Mammary epithelial cell (primary cell): ENCODE measurements at regions of chr10 and their contacts with region 1.

Region 1: DNA sequence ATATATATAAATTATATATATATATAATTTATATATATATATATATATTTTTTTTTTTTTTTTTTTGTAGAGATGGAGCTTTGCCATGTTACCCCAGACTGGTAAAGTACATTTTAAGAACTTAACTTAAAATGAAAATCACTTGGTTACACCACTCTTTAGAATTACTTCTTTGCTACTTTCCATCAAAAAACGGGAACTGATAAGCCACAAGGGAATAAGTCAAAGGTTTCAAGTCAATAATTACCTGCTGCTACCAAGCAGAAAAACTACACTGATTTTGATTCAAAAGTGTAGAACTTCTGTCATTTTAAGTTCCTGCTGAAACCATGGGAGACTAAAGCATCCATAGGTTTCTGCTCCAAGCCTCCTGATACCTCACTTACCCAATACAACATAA is 12.2 kb downstream of the PPA1 start:
- DNase-seq: no peak
- H3K4me3 ChIP-seq: no peak overlapping the region
- H3K27ac ChIP-seq: peak overlapping the region; percentile 42
- H3K4me1 ChIP-seq: peaks cover 22% of the 10 kb centered on the region
- H3K27me3 ChIP-seq: no peaks in the 10 kb centered on the region
- CTCF ChIP-seq: no peak

Region 2: GRCh38 chr10:69968830-69969229 is 252.2 kb before region 1 on chr10:
- CTCF ChIA-PET with region 1: no interaction called
- dilution Hi-C with region 1: no loop called
- in situ Hi-C with region 1: no loop called
- intact Hi-C with region 1: loop called (anchors 1 kb)
- DNase-seq: peak; percentile 32
- H3K4me3 ChIP-seq: no peak overlapping the region
- H3K27ac ChIP-seq: no peak overlapping the region
- H3K4me1 ChIP-seq: peaks cover 4% of the 10 kb centered on the region
- H3K27me3 ChIP-seq: peaks cover 3% of the 10 kb centered on the region
- CTCF ChIP-seq: peak; percentile 29 to 60

Region 3: DNA sequence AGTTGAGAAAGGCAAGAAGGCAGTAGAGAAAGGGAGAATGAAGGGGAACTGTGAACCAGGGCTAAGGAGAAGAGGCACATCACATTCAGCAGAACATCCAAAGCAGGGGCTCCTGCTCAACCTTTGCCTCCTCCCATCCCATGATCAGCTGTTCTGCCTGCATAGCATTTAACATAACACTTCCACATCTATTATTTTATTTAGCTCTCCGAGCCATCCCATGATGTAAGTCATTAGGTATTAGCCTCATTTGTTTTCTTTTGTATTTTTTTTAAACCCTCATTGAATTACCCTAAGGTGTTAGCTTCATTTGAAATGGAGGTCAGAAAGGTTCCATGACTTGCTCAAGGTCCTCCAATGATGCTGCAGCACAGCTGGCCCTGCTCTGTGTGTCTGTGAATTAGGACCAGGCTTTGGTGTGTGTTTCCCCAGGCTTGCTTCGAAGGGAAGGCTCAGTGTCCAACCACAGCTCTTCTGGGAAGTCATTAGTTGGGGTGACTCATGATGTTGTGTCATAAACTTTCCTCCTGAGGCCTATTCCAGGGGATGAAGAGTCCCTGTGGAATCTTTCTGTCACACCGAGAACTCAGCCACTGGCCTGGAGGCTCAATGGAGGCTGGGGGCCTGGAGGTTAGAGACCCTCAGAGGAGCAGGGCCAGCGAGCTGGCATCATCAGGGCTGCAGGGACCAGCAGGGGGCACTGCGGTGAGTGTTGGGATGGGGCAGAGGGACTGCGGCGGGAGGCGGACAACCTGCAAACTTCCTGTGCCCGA is 46.3 kb after region 1 on chr10:
- CTCF ChIA-PET with region 1: interaction called, 11 read pairs
- dilution Hi-C with region 1: no loop called
- in situ Hi-C with region 1: no loop called
- intact Hi-C with region 1: no loop called
- DNase-seq: peak; percentile 97
- H3K4me3 ChIP-seq: no peak overlapping the region
- H3K27ac ChIP-seq: peak overlapping the region; percentile 53
- H3K4me1 ChIP-seq: peaks cover 26% of the 10 kb centered on the region
- H3K27me3 ChIP-seq: no peaks in the 10 kb centered on the region
- CTCF ChIP-seq: peak in 1 of 2 donors; percentile 12

Region 4: DNA sequence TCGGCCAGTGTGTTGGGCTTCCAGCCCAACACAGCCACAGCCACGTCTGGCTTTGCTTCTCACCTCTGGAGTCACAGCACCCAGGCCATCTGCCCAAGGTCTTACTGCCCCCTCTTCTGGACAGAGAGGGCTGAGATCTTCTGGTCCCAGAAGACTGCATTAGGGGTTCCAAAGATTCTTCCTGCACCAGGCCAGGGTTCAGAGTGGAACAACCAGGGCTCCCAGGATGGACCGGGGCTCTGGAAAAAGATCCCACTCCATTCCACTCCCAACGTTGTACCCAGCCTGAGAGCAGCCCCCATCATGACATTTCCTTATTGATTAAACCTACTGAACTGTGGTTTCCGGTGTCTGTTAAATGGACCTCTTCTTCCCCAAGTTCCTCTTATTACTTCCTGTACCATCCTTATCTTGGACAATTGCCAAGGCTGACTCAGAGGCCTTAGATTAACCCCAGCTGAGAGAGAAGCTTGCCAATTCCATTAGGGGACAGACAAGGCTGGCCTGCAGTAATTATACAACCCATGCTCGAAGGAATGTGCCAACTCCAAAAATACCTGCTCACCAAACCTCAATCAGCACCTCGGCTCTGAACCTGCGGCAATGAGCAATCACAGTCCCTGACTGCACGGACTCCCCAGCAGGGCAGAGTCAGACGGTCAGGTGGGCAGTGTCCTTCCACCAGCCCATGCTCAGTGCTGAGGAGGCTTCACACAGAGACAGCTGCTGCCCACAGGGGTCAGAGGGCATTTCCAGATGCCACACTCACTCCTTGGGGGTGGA is 110.6 kb after region 1 on chr10:
- CTCF ChIA-PET with region 1: no interaction called
- dilution Hi-C with region 1: no loop called
- in situ Hi-C with region 1: no loop called
- intact Hi-C with region 1: loop called (anchors 1 kb)
- DNase-seq: peak; percentile 96
- H3K4me3 ChIP-seq: no peak overlapping the region
- H3K27ac ChIP-seq: no peak overlapping the region
- H3K4me1 ChIP-seq: peaks cover 20% of the 10 kb centered on the region
- H3K27me3 ChIP-seq: no peaks in the 10 kb centered on the region
- CTCF ChIP-seq: peak in 1 of 2 donors; percentile 48

Region 5: GRCh38 chr10:70355051-70356021 is 134.3 kb after region 1 on chr10:
- CTCF ChIA-PET with region 1: no interaction called
- dilution Hi-C with region 1: no loop called
- in situ Hi-C with region 1: loop called (anchors 5 to 10 kb)
- intact Hi-C with region 1: no loop called
- DNase-seq: no peak
- H3K4me3 ChIP-seq: no peak overlapping the region
- H3K27ac ChIP-seq: no peak overlapping the region
- H3K4me1 ChIP-seq: no peaks in the 10 kb centered on the region
- H3K27me3 ChIP-seq: no peaks in the 10 kb centered on the region
- CTCF ChIP-seq: no peak